CD4-positive, alpha-beta T cell (primary cell): ENCODE measurements at regions of chr16 and their contacts with region 1.

Region 1: DNA sequence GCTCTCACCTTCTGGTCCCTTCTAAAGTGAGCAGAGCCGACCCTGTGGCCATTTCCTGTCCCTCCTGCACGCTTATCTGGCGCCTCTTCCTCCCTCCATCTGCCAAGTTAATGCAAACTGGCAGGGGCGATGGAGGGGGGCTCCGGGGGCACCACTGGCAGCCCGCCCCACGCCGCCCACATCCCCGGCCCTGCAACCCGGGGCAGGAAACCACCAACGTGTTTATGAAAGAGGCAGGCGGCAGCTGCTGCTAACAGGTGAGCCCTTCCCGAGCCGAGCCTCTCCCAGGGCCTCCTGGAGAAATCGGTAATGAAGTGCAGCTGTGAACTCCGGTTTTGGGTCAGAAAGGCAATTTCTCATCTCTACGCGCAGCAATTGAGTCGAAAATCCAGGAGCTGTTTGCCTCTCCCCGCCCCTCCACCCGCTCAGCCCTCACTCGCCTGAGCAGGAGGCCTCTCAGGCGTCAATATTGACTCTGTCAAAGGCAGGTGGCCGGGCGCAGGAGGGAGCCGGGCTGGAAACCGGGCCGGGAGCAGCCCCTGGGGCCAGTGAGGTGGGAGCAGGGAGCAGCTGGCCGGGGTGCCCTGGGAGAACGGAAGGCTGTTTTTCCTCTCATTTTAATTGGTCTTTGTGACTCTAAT is 164.4 kb upstream of the GSE1 start:
- DNase-seq: peak; percentile 30 to 76 (median 56)
- ATAC-seq: peak; percentile 82
- H3K4me3 ChIP-seq: peak overlapping the region; percentile 19
- H3K4me3 Mint-ChIP-seq: peak overlapping the region; percentile 44
- H3K27ac ChIP-seq: peak overlapping the region; percentile 34 to 62
- H3K27ac Mint-ChIP-seq: peak overlapping the region; percentile 87
- H3K4me1 ChIP-seq: peaks cover 50% of the 10 kb centered on the region
- H3K4me1 Mint-ChIP-seq: peaks cover 48% of the 10 kb centered on the region
- H3K27me3 ChIP-seq: no peaks in the 10 kb centered on the region
- H3K27me3 Mint-ChIP-seq: no peaks in the 10 kb centered on the region
- CTCF ChIP-seq: no peak

Region 2: DNA sequence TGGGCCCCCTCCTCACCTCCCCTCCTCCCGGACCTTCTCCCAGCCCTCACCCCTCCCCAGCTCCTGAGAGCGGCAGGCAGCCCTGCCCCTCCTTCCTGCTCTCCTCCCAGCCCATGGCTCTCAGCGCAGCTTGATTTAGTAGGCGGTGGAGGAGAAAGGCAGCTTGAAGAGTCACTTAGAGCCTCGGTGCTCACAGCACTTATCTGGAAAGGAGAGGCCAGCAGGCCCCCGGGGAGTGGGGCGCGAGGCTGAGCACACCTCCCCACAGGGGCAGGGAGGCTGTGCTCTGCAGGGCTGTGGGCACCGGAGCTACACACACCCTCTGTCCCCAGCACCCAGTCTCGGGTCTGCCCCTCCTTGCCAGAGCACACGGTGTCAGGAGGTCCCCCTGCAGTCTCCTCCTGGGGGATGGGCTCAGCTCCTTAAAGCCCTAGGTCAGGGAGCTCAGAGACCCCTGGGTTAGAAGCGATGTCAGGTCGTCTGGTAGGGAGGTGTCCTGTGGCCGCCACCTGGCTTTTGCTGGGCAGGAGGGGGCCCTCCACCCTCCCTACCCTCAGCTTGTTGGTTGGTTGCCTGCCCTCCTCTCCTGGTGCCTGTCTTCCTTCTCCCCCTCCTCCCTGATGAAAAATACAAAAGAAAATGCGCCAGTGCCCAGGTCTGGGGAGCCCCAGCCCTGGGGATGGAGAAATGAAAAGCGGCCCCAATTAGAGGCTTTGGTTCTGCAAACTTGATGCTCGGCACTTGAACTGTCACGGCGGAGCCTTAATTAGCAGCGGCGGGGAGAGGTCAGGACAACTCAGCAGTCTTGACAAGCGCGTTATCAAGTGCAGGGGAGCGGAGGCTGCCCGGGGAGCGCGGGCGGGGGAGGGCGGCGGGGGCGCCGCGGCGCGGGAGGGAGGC is 13.4 kb after region 1 on chr16:
- CTCF ChIA-PET with region 1: no interaction called
- POLR2A ChIA-PET with region 1: interaction called, 16 read pairs
- intact Hi-C with region 1: loop called in 1 of 2 experiments (anchors 1 kb)
- DNase-seq: peak in 4 of 14 experiments; percentile 17 to 58 (median 47)
- ATAC-seq: peak; percentile 70
- H3K4me3 ChIP-seq: peak overlapping the region; percentile 31
- H3K4me3 Mint-ChIP-seq: peak overlapping the region; percentile 85
- H3K27ac ChIP-seq: no peak overlapping the region
- H3K27ac Mint-ChIP-seq: no peak overlapping the region
- H3K4me1 ChIP-seq: peaks cover 18% of the 10 kb centered on the region
- H3K4me1 Mint-ChIP-seq: peaks cover 5% of the 10 kb centered on the region
- H3K27me3 ChIP-seq: peaks cover 36 to 39% of the 10 kb centered on the region in 2 experiments
- H3K27me3 Mint-ChIP-seq: peaks cover 33% of the 10 kb centered on the region
- CTCF ChIP-seq: no peak